ENCODE measurements at regions of chr14 and their contacts with region 1.

Region 1: DNA sequence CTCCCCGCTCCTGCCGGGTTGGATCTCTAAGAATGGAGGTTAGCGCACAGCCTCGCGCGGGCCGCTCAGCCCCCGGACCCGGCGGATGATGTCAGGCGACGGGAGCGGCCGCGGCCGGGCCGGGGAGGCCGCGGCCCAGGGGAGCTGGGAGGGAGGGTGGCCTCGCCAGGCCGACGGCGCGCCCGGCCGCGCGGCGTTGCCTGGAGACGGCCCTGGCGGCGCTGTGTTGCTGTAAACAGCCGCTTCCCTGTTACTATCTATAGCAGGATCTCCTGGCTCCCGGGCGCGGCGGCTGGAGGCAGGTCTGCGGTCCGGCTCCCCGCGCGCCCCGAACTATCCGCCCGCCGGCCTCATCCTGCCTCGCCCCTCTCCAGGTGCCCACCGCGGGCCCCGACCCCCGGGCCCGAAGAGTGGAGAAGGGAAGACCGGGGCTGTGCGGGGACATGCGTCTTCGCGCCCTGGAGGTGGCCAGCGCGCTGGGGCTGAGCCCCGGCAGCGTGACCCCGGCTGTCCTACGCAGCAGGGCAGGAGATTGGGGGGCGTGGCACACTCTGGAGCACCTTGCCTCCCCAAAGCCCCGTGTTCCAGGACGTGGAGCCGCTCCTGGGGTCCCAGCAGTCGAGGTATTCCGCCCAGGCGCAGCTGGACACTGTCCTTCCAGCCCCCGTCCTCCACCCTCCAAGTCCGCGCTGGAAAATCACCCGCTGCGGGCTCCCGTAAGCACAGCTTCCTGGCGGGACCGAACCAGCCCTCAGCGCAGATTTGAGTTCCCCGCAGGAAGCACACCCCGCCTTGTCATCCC is 1.4 kb upstream of the FOS start:
- DNase-seq: peak; percentile 89
- H3K4me3 Mint-ChIP-seq: peak overlapping the region; percentile 94
- H3K27ac Mint-ChIP-seq: peak overlapping the region; percentile 98
- H3K4me1 Mint-ChIP-seq: peaks cover 12% of the 10 kb centered on the region
- H3K27me3 Mint-ChIP-seq: no peaks in the 10 kb centered on the region
- CTCF ChIP-seq: no peak

Region 2: DNA sequence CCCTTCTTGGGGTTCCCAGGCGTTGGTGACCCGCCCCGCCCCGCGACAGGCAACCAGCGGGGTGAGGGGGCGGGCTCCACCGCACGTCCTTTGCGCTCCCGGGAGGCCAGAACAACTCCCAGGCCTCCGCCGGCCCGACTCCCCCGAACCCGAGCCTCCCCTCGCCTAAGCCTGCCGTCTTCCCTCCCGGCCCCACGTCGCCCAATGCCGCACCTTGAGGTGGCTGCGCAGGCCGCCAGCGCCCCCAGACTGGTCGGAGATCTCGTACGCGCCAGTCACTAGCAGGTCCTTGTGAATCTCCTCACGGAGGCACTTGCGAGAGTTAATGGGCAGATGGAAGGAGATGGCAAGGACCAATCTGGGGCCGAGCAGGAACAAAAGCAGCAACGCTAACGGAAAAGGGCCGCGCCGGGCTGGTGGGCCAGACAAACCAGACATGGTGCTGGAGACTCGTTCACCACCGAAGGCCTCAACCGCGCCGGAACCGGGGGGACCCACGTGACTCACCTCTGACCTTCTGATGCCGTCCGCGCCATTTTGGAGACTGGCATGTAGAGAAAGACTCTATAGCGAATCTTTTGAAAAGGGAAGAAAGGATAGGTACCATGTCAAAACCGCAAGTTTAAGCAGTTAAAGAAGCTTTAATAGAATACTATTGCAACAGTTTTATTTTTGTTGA is 100.9 kb before region 1 on chr14 and contains the start of gene TMED10:
- CTCF ChIA-PET with region 1: no interaction called
- intact Hi-C with region 1: loop called (anchors 2 kb)
- DNase-seq: peak; percentile 86
- H3K4me3 Mint-ChIP-seq: peak within 1 kb of the TSS; percentile 97
- H3K27ac Mint-ChIP-seq: peak within 1 kb of the TSS; percentile 98
- H3K4me1 Mint-ChIP-seq: peaks cover 21% of the 10 kb centered on the region
- H3K27me3 Mint-ChIP-seq: no peaks in the 10 kb centered on the region
- CTCF ChIP-seq: no peak
- total RNA-seq, gene TMED10: 391 and 434 TPM in 2 replicates

Measured in Calu3 (cell line).